Activated naive CD4-positive, alpha-beta T cell treated with anti-CD3 and anti-CD28 coated beads for 36 hours (primary cell): ENCODE measurements at regions of chr11 and their contacts with region 1.

Region 1: DNA sequence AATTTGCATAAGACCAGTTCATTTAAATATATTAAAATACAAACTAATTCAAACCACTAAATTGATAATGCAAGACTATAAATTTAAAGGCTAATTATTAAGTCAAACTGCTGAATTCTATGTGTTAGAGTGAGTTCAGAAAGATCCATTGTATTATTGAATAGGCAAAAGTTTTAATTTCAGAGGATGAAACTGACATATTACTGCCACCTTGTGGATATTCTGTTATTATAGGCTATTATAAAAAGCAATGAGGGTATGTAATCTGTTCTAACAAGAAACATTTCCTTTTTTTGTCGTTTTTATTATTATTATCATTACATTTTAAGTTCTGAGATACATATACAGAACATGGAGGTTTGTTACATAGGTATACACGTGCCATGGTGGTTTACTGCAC is 20.9 kb upstream of the NAALAD2 start:
- DNase-seq: no peak
- H3K4me3 Mint-ChIP-seq: no peak overlapping the region
- H3K27ac Mint-ChIP-seq: no peak overlapping the region
- H3K4me1 Mint-ChIP-seq: no peaks in the 10 kb centered on the region
- H3K27me3 Mint-ChIP-seq: peaks cover 5% of the 10 kb centered on the region

Region 2: GRCh38 chr11:89327885-89328284 is 785.7 kb before region 1 on chr11:
- CTCF ChIA-PET with region 1: no interaction called
- intact Hi-C with region 1: loop called (anchors 10 kb)
- DNase-seq: no peak
- H3K4me3 Mint-ChIP-seq: no peak overlapping the region
- H3K27ac Mint-ChIP-seq: no peak overlapping the region
- H3K4me1 Mint-ChIP-seq: no peaks in the 10 kb centered on the region
- H3K27me3 Mint-ChIP-seq: no peaks in the 10 kb centered on the region

Region 3: GRCh38 chr11:90229791-90230190 is 116.2 kb after region 1 on chr11:
- CTCF ChIA-PET with region 1: no interaction called
- intact Hi-C with region 1: no loop called
- DNase-seq: no peak
- H3K4me3 Mint-ChIP-seq: no peak overlapping the region
- H3K27ac Mint-ChIP-seq: no peak overlapping the region
- H3K4me1 Mint-ChIP-seq: no peaks in the 10 kb centered on the region
- H3K27me3 Mint-ChIP-seq: no peaks in the 10 kb centered on the region